Spleen (tissue), 13 donors: ENCODE measurements at regions of chr6 and their contacts with region 1.

Region 1: DNA sequence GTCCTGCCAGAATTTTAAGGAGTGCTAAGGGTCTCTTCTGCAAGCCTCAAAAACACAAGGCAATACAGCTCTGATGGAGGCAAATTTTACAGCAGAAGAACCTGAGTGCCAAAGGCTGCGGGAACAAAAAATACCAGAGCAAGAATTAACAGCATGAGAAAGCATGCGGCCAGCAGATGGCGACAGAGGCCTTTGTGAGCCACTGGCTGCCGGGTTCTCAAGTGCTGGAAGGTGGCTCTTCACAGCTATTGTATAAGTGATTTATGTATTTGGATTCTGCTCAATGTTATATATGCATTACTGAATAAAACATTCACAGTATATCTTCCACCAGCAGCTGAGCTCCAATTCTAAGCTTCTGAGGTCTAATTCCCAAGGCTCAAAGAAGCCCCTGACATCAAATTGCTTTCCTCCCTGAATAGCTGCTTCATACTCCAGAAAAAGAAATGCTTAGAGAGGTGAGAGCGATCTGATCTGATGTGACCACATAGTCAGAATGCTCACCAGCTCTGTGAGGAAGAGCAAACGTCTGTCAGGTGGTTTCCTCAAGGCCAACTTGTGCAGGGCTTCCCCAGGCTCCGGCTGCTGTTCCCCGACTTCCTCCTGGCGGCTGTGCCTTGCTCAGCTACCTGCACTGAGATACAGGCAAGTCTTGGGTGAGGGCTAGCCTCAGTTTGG is 58.6 kb downstream of the PPP1R3G start:
- DNase-seq: peak; percentile 94
- H3K4me3 ChIP-seq: no peak overlapping the region
- H3K27ac ChIP-seq: no peak overlapping the region
- H3K4me1 ChIP-seq: peaks cover 0 to 30% (median 8%) of the 10 kb centered on the region in 6 donors
- H3K27me3 ChIP-seq: no peaks in the 10 kb centered on the region
- CTCF ChIP-seq: peak; percentile 69 to 91 (median 82)
- POLR2A ChIP-seq: no peak

Region 2: GRCh38 chr6:5302995-5303622 is 159.3 kb after region 1 on chr6:
- intact Hi-C with region 1: loop called (anchors 5 kb)
- DNase-seq: peak; percentile 80
- H3K4me3 ChIP-seq: peak overlapping the region in 1 of 8 donors; percentile 34
- H3K27ac ChIP-seq: peak overlapping the region in 4 of 8 donors; percentile 17 to 49 (median 43)
- H3K4me1 ChIP-seq: peaks cover 0 to 22% (median 18%) of the 10 kb centered on the region in 6 donors
- H3K27me3 ChIP-seq: no peaks in the 10 kb centered on the region
- CTCF ChIP-seq: peak; percentile 5 to 68 (median 58)
- POLR2A ChIP-seq: no peak

Region 3: GRCh38 chr6:5398530-5398929 is 254.8 kb after region 1 on chr6:
- intact Hi-C with region 1: loop called (anchors 5 kb)
- DNase-seq: no peak
- H3K4me3 ChIP-seq: no peak overlapping the region
- H3K27ac ChIP-seq: no peak overlapping the region
- H3K4me1 ChIP-seq: no peaks in the 10 kb centered on the region
- H3K27me3 ChIP-seq: no peaks in the 10 kb centered on the region
- CTCF ChIP-seq: peak in 10 of 11 experiments; percentile 12 to 53 (median 42)
- POLR2A ChIP-seq: no peak